A549 (cell line): ENCODE measurements at regions of chr15 and their contacts with region 1.

Region 1: DNA sequence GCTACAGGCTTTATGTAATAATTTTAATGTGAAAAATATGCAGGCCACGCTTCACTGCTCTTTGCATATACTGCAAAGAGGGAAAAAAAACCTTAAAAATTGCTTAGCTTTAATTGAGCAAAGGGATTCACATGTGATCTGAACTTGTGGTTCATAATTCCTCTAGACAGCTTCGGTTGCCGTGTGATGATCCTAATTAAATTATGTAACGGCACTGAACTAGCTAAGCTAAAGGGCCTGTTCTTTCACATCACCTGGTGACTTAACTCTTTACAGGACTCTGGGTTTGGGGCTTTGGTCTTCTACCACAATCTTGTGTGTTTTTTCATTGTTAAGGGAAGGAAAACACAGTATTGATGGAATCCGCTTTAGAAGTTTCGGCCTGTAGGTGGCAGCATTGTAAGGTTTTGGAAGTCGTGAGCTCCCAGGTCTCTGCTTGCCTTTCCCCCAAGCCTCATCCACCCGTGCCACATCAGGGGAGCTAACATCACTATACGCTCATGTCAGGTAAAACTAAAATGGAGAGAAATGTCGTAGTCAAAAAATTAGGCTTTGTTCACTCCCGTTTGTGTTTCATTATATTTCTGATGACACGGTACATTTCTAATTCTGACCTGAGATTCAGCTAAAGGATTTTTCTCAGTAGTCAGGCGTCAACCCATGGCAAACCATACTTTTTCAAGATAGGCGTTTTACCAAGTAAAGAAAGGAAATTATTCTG is 205.6 kb upstream of the DPH6 start:
- DNase-seq: peak; percentile 10 to 68
- ATAC-seq: peak; percentile 73 to 89
- H3K4me3 ChIP-seq: no peak overlapping the region
- H3K27ac ChIP-seq: no peak overlapping the region
- H3K4me1 ChIP-seq: no peaks in the 10 kb centered on the region
- CTCF ChIP-seq: peak; percentile 73
- EP300 ChIP-seq: no peak
- POLR2A ChIP-seq: no peak
- RAD21 ChIP-seq: peak; percentile 73 to 74

Region 2: GRCh38 chr15:35740761-35741160 is 10.8 kb before region 1 on chr15:
- CTCF ChIA-PET with region 1: interaction called, 13 read pairs
- POLR2A ChIA-PET with region 1: no interaction called
- DNase-seq: no peak
- ATAC-seq: no peak
- H3K4me3 ChIP-seq: no peak overlapping the region
- H3K27ac ChIP-seq: no peak overlapping the region
- H3K4me1 ChIP-seq: no peaks in the 10 kb centered on the region
- CTCF ChIP-seq: no peak
- EP300 ChIP-seq: no peak
- POLR2A ChIP-seq: no peak
- RAD21 ChIP-seq: no peak